ENCODE measurements at regions of chr4 and their contacts with region 1.

Region 1: GRCh38 chr4:168710353-168710946 is 213.6 kb downstream of the PALLD start:
- DNase-seq: peak; percentile 58
- H3K4me3 Mint-ChIP-seq: no peak overlapping the region
- H3K27ac Mint-ChIP-seq: peak overlapping the region; percentile 46
- H3K4me1 Mint-ChIP-seq: peaks cover 16% of the 10 kb centered on the region
- H3K27me3 Mint-ChIP-seq: no peaks in the 10 kb centered on the region
- CTCF ChIP-seq: peak; percentile 59

Region 2: GRCh38 chr4:168248176-168248710 is 462.2 kb before region 1 on chr4:
- CTCF ChIA-PET with region 1: no interaction called
- POLR2A ChIA-PET with region 1: no interaction called
- intact Hi-C with region 1: no loop called
- DNase-seq: no peak
- H3K4me3 Mint-ChIP-seq: no peak overlapping the region
- H3K27ac Mint-ChIP-seq: no peak overlapping the region
- H3K4me1 Mint-ChIP-seq: no peaks in the 10 kb centered on the region
- H3K27me3 Mint-ChIP-seq: no peaks in the 10 kb centered on the region
- CTCF ChIP-seq: no peak

Region 3: DNA sequence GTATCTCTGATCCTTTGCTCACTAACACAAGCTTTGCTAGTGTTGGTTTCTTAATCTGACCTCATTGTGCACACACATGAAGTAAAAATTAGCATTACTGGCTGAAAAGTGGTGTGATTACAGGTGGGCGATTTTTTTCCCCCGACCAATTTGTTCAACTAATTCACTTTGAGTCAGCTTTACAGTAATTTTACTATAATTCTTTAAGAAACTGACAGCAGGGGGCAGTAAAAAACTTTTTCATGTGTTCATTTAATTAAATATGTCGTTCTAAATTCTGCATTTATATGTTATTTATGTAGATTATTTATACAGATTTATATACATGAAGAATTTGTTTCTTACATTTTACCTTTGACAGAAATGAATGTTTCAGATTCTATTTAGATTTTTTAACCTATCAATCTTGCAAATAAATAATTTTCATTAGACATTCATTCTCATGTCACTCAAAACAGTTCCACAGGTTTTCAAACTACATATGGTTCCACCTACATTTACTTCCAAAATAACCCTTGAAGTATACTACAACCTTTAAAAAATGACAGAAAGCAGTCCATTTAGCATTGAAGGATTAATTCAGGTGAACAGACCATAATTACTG is 196.1 kb before region 1 on chr4:
- CTCF ChIA-PET with region 1: interaction called, 10 read pairs
- POLR2A ChIA-PET with region 1: no interaction called
- intact Hi-C with region 1: loop called (anchors 10 kb)
- DNase-seq: peak; percentile 69
- H3K4me3 Mint-ChIP-seq: no peak overlapping the region
- H3K27ac Mint-ChIP-seq: no peak overlapping the region
- H3K4me1 Mint-ChIP-seq: peaks cover 10% of the 10 kb centered on the region
- H3K27me3 Mint-ChIP-seq: no peaks in the 10 kb centered on the region
- CTCF ChIP-seq: peak; percentile 33

Region 4: DNA sequence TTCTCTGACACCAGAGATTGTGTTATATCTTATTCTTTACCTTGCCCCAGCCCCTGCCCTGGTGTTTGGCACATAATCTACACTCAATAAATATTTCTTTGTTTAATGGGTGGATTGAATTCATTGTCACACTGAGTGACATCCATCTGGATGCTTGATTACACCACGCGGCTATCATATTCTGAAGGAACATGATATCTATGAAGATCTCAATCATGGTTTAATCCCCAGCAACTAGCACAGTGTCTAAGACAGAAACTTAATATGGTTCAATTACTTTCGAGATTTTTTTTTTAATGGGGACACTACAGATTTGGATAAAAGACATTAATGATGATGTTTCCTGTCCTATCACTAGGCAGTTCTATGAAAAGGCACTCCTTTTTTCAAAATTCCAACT is 32.7 kb after region 1 on chr4:
- CTCF ChIA-PET with region 1: no interaction called
- POLR2A ChIA-PET with region 1: no interaction called
- intact Hi-C with region 1: no loop called
- DNase-seq: no peak
- H3K4me3 Mint-ChIP-seq: no peak overlapping the region
- H3K27ac Mint-ChIP-seq: no peak overlapping the region
- H3K4me1 Mint-ChIP-seq: no peaks in the 10 kb centered on the region
- H3K27me3 Mint-ChIP-seq: no peaks in the 10 kb centered on the region
- CTCF ChIP-seq: no peak

Region 5: GRCh38 chr4:168803732-168804131 is 93.3 kb after region 1 on chr4:
- CTCF ChIA-PET with region 1: interaction called, 15 read pairs
- POLR2A ChIA-PET with region 1: interaction called, 3 read pairs
- intact Hi-C with region 1: no loop called
- DNase-seq: peak; percentile 83
- H3K4me3 Mint-ChIP-seq: no peak overlapping the region
- H3K27ac Mint-ChIP-seq: peak overlapping the region; percentile 63
- H3K4me1 Mint-ChIP-seq: peaks cover 16% of the 10 kb centered on the region
- H3K27me3 Mint-ChIP-seq: no peaks in the 10 kb centered on the region
- CTCF ChIP-seq: no peak

Region 6: GRCh38 chr4:168831919-168832762 is 121.7 kb after region 1 on chr4:
- CTCF ChIA-PET with region 1: interaction called, 7 read pairs
- POLR2A ChIA-PET with region 1: interaction called, 47 read pairs
- intact Hi-C with region 1: loop called (anchors 1 kb)
- DNase-seq: peak; percentile 85
- H3K4me3 Mint-ChIP-seq: peak overlapping the region; percentile 93
- H3K27ac Mint-ChIP-seq: peak overlapping the region; percentile 97
- H3K4me1 Mint-ChIP-seq: peaks cover 24% of the 10 kb centered on the region
- H3K27me3 Mint-ChIP-seq: no peaks in the 10 kb centered on the region
- CTCF ChIP-seq: no peak

Region 7: DNA sequence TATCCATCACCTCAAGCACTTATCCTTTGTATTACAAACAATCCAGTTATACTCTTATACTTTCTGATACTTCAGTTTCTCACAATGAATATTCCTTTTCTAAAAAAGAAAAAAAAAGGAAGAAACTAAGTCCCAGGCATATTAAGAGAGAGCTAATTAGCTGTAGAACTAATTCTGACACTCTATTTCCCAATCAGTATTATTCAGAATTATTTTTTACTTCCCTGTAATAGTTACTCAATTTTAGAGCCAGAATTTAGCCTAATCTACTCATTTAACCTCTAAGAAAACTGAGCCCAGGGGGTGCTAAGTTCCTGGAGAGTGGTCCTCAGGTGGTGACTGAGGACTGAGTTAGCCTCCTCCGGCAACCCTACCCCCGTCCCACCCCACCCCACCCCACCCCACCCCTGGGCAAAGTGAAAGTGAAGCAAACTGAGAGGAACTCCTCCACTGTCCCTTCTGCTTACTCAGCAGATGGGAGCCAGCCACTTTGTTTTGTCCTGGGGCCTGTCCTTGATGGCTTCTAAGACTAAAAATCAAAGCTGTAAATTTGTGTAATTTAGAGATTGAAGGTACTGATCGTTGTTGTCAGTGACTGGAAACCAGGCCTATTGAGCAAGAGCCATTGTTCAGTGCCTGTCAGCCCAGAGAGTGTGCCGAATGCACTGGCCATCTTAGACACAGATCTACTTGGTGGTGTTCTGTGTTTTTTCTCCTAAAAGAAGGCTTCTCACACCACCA is 137.5 kb after region 1 on chr4:
- CTCF ChIA-PET with region 1: interaction called, 34 read pairs
- POLR2A ChIA-PET with region 1: interaction called, 3 read pairs
- intact Hi-C with region 1: no loop called
- DNase-seq: peak; percentile 57
- H3K4me3 Mint-ChIP-seq: peak overlapping the region; percentile 65
- H3K27ac Mint-ChIP-seq: peak overlapping the region; percentile 93
- H3K4me1 Mint-ChIP-seq: peaks cover 38% of the 10 kb centered on the region
- H3K27me3 Mint-ChIP-seq: no peaks in the 10 kb centered on the region
- CTCF ChIP-seq: no peak

Region 8: GRCh38 chr4:168923526-168924194 is 213.2 kb after region 1 on chr4:
- CTCF ChIA-PET with region 1: interaction called, 173 read pairs
- POLR2A ChIA-PET with region 1: interaction called, 3 read pairs
- intact Hi-C with region 1: no loop called
- DNase-seq: peak; percentile 78
- H3K4me3 Mint-ChIP-seq: no peak overlapping the region
- H3K27ac Mint-ChIP-seq: no peak overlapping the region
- H3K4me1 Mint-ChIP-seq: peaks cover 6% of the 10 kb centered on the region
- H3K27me3 Mint-ChIP-seq: no peaks in the 10 kb centered on the region
- CTCF ChIP-seq: peak; percentile 71

Region 9: GRCh38 chr4:169010125-169011023 is 299.9 kb after region 1 on chr4 and contains the start of gene CBR4:
- CTCF ChIA-PET with region 1: no interaction called
- POLR2A ChIA-PET with region 1: no interaction called
- intact Hi-C with region 1: no loop called
- DNase-seq: peak; percentile 98
- H3K4me3 Mint-ChIP-seq: peak within 1 kb of the TSS; percentile 94
- H3K27ac Mint-ChIP-seq: peak within 1 kb of the TSS; percentile 97
- H3K4me1 Mint-ChIP-seq: peaks cover 30% of the 10 kb centered on the region
- H3K27me3 Mint-ChIP-seq: no peaks in the 10 kb centered on the region
- CTCF ChIP-seq: peak; percentile 34
- total RNA-seq, gene CBR4: 19.2 and 24.0 TPM in 2 replicates

Region 10: DNA sequence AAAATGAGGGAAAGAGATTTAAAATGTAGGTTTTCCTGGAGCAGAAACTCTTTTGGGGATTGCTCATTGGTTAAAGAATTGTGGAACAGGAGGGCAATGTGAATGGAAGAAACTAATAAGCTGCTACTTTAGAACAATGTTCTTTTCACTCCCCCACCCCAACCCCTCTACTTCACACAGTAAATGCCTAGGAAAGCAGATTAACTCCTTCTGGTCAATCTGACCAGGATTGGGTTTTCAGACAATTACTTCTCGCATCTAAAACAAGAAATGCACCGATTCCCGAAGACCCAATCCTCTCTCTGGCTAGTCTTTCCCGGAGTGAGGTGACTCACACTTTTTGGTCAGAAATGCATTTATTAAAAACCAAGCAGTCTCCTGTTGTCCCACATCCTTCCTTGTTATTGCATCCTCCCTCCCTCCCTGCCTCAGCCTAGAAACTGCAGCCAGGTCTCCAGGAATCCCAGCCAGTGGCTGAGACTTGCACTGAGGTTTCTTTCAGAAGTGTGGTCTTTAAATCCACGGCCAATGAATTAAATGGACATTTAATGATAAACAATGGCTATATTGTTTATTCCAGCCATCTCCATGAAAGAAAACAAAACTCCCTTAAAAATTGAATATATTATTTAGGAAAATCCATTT is 1294.3 kb after region 1 on chr4:
- CTCF ChIA-PET with region 1: no interaction called
- POLR2A ChIA-PET with region 1: no interaction called
- intact Hi-C with region 1: no loop called
- DNase-seq: peak; percentile 9
- H3K4me3 Mint-ChIP-seq: no peak overlapping the region
- H3K27ac Mint-ChIP-seq: no peak overlapping the region
- H3K4me1 Mint-ChIP-seq: no peaks in the 10 kb centered on the region
- H3K27me3 Mint-ChIP-seq: no peaks in the 10 kb centered on the region
- CTCF ChIP-seq: no peak